AG04450 (cell line): ENCODE measurements at regions of chr2 and their contacts with region 1.

Region 1: GRCh38 chr2:172588931-172589330 is 33.0 kb downstream of the PDK1 start:
- DNase-seq: no peak
- H3K4me3 ChIP-seq: no peak overlapping the region
- H3K27ac ChIP-seq: no peak overlapping the region
- H3K27me3 ChIP-seq: no peaks in the 10 kb centered on the region
- CTCF ChIP-seq: no peak

Region 2: GRCh38 chr2:172607379-172607928 is 18.5 kb after region 1 on chr2:
- CTCF ChIA-PET with region 1: interaction called, 17 read pairs
- POLR2A ChIA-PET with region 1: no interaction called
- DNase-seq: no peak
- H3K4me3 ChIP-seq: no peak overlapping the region
- H3K27ac ChIP-seq: no peak overlapping the region
- H3K27me3 ChIP-seq: no peaks in the 10 kb centered on the region
- CTCF ChIP-seq: no peak

Region 3: GRCh38 chr2:172655091-172655837 is 66.3 kb after region 1 on chr2:
- CTCF ChIA-PET with region 1: interaction called, 14 read pairs
- POLR2A ChIA-PET with region 1: no interaction called
- DNase-seq: peak; percentile 72
- H3K4me3 ChIP-seq: no peak overlapping the region
- H3K27ac ChIP-seq: peak overlapping the region; percentile 93
- H3K27me3 ChIP-seq: no peaks in the 10 kb centered on the region
- CTCF ChIP-seq: no peak

Region 4: GRCh38 chr2:172674034-172674967 is 85.4 kb after region 1 on chr2:
- CTCF ChIA-PET with region 1: interaction called, 41 read pairs
- POLR2A ChIA-PET with region 1: no interaction called
- DNase-seq: no peak
- H3K4me3 ChIP-seq: no peak overlapping the region
- H3K27ac ChIP-seq: no peak overlapping the region
- H3K27me3 ChIP-seq: no peaks in the 10 kb centered on the region
- CTCF ChIP-seq: peak; percentile 54